Ascending aorta (tissue), 2 donors: ENCODE measurements at regions of chr17 and their contacts with region 1.

Region 1: DNA sequence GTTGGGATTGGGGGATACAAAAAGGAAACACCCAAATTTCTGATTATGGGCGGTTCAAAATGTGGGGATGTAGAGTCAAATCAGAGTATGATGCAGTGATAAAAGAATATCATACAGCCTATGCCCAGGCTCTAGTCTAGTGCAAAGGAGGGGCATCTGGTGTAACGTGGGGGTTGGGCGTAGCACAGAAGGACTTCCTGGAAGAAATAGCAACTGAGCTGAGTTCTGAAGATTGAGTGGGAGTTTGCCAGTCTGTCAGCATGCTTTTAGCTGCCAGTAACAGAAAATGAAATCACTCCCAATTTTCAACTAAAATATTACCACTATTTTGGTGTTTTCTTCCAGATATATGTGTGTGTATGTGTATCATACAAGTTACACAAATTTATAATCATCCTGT is 196.9 kb downstream of the SPECC1 start:
- DNase-seq: no peak
- H3K4me3 ChIP-seq: no peak overlapping the region
- H3K27ac ChIP-seq: peak overlapping the region; percentile 48 to 78
- H3K4me1 ChIP-seq: peaks cover 9 to 42% of the 10 kb centered on the region in 2 donors
- H3K27me3 ChIP-seq: no peaks in the 10 kb centered on the region
- CTCF ChIP-seq: no peak

Region 2: DNA sequence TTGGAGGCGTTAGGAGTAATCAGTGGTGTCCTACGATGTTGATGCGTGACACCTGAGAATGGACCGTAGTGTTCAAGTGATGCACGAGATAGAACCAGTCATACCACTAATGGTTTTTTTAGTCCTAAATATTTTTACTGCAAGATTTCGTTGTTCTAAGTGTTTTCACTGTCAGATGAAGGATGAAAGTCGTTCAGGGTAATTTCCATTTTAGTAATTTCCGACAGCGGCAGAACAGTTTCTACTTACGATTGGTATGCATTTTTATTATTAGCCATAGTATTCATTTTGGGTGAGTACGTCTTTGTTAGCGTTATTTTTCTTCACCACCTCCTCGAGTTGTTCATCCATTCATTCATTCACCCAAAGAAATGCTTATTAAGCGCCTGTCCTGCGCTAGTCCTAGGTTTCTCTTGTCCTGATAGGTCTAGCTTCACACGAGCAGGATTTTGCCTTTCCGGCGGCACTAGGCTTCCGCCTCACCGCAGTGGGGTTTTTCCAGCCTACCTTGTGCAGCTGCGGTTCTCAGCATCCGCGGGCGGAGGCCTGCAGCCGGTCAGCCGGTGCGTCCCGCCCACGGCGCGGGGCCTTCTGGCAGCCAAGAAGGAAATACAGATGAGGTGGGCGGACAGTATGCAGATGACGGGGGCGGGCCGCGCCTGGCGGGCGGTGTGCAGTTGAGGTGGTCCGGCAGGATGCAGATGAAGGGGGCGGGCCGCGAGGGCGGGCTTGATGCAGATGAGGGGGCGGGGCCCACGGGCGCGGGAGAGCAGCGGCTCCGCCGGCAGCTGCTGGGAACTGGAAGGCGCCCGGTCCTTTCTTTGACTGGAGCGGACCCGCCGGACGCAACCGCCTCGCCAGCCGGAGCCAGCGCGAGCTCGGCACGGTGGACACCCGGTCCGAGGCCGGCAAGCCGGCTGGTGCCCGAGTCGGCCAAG is 50.5 kb before region 1 on chr17:
- intact Hi-C with region 1: loop called (anchors 2 kb)
- DNase-seq: peak; percentile 97 to 99
- H3K4me3 ChIP-seq: peak overlapping the region; percentile 58 to 72
- H3K27ac ChIP-seq: peak overlapping the region; percentile 76 to 87
- H3K4me1 ChIP-seq: peaks cover 5 to 6% of the 10 kb centered on the region in 2 donors
- H3K27me3 ChIP-seq: no peaks in the 10 kb centered on the region
- CTCF ChIP-seq: peak in 1 of 3 experiments; percentile 19

Region 3: DNA sequence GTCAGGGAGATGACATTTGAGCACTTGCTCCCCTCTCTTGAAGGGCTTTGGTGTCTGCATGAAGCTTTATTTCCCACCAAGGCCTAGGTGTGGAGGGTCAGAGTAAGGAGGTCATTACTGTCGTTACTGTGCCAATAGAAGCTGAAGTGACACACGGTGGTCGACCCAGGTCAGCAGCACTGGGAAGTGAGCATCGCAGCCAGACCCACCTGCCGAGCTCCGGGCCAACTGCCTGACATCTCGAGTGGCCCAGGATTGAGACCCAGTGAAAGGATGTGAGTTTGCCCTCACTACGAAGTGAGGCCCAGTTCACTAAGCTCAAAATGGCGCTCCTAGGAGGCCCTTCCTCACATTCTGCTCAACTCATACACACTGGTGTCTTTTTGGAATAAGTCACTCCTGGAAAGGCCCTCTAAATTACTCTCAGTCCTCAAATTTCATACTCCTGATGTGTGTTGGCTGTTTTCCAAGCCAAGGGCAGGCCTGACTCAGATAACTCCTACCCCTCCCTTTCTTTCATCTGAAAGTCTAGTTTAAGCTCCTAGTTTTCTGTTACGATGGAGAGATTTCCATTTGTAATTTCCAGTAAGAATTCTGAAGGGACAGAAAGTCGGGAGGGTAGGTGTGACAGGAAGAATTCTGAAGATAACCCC is 60.9 kb after region 1 on chr17:
- intact Hi-C with region 1: no loop called
- DNase-seq: peak in 1 of 2 donors; percentile 77
- H3K4me3 ChIP-seq: no peak overlapping the region
- H3K27ac ChIP-seq: peak overlapping the region; percentile 87 to 90
- H3K4me1 ChIP-seq: peaks cover 10 to 41% of the 10 kb centered on the region in 2 donors
- H3K27me3 ChIP-seq: no peaks in the 10 kb centered on the region
- CTCF ChIP-seq: no peak